Esophagus muscularis mucosa (tissue), 4 donors: ENCODE measurements at regions of chr20 and their contacts with region 1.

Region 1: GRCh38 chr20:60845146-60845545 is 406.9 kb upstream of the CDH4 start:
- DNase-seq: no peak
- H3K4me3 ChIP-seq: no peak overlapping the region
- H3K27ac ChIP-seq: no peak overlapping the region
- H3K4me1 ChIP-seq: no peaks in the 10 kb centered on the region
- H3K27me3 ChIP-seq: no peaks in the 10 kb centered on the region
- CTCF ChIP-seq: no peak
- EP300 ChIP-seq: no peak
- POLR2A ChIP-seq: no peak

Region 2: GRCh38 chr20:60785785-60786184 is 59.4 kb before region 1 on chr20:
- intact Hi-C with region 1: no loop called
- DNase-seq: no peak
- H3K4me3 ChIP-seq: no peak overlapping the region
- H3K27ac ChIP-seq: no peak overlapping the region
- H3K4me1 ChIP-seq: peaks cover 0 to 32% (median 27%) of the 10 kb centered on the region in 4 donors
- H3K27me3 ChIP-seq: no peaks in the 10 kb centered on the region
- CTCF ChIP-seq: no peak
- EP300 ChIP-seq: no peak
- POLR2A ChIP-seq: no peak

Region 3: GRCh38 chr20:61120595-61121515 is 275.7 kb after region 1 on chr20:
- intact Hi-C with region 1: loop called (anchors 10 kb)
- DNase-seq: no peak
- H3K4me3 ChIP-seq: no peak overlapping the region
- H3K27ac ChIP-seq: no peak overlapping the region
- H3K4me1 ChIP-seq: peaks cover 6 to 47% (median 26%) of the 10 kb centered on the region in 4 donors
- H3K27me3 ChIP-seq: no peaks in the 10 kb centered on the region
- CTCF ChIP-seq: peak; percentile 62 to 78 (median 62)
- EP300 ChIP-seq: no peak
- POLR2A ChIP-seq: no peak

Region 4: GRCh38 chr20:61271312-61272221 is 426.4 kb after region 1 on chr20:
- intact Hi-C with region 1: no loop called
- DNase-seq: no peak
- H3K4me3 ChIP-seq: no peak overlapping the region
- H3K27ac ChIP-seq: no peak overlapping the region
- H3K4me1 ChIP-seq: peaks cover 0 to 11% (median 3%) of the 10 kb centered on the region in 4 donors
- H3K27me3 ChIP-seq: peaks cover 0 to 31% (median 0%) of the 10 kb centered on the region in 4 donors
- CTCF ChIP-seq: no peak
- EP300 ChIP-seq: no peak
- POLR2A ChIP-seq: no peak